Gastrocnemius medialis (tissue), 4 donors: ENCODE measurements at regions of chr4 and their contacts with region 1.

Region 1: DNA sequence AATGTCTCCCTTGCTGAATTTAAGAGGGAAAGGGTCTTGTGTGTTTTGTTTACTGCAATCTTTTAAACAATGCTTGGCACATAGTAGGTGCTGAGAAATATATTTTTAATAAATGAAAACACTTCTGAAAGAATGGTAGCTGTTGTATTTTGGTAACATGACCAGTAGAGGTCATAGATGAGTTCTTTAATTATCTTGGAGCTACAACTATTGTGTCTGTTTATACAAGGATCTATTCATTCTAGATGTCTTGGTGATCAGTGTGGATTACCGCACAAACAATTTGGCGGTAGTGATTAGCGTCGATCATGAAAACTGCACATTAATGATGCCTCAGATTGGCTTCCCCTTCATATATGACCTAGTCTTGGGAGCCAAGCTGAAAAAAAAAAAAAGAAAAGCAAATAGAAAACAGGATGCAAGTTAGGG is 21.4 kb upstream of the SCRG1 start:
- DNase-seq: no peak
- ATAC-seq: no peak
- H3K4me3 ChIP-seq: no peak overlapping the region
- H3K27ac ChIP-seq: no peak overlapping the region
- H3K4me1 ChIP-seq: no peaks in the 10 kb centered on the region
- H3K27me3 ChIP-seq: no peaks in the 10 kb centered on the region
- CTCF ChIP-seq: peak in 1 of 5 experiments; percentile 40
- POLR2A ChIP-seq: no peak

Region 2: DNA sequence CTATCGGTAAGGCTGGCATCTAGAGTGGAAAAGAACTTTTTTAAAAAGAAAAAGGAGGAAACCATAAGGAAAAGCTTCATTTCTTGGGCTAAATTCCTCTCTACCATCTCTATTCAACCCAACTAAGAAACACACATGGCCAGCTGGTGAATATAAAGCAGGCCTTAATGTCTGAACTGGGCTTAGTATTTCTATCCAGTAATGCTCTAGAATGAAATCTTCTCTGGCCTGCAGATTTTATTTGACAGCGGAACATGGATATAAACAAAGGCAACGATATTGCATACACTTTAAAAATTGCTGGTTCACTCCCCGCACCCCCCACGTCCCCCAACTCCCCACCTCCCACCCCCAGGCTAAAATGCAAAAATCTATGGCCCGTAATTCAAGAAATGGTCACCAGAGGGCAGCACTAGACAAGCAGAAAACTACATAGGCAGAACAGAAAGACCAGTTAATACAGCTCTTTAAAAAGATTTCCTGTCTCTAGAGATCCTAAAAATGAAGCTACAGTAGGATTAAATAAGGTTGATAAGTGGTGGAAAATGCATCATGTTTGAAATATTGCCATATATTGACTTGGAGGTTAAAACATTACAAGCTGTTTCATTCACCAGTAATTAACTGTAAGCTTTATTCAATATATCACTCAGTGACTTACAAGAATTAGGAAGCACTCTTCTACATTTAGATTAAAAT is 407.0 kb before region 1 on chr4:
- in situ Hi-C with region 1: loop called in 3 of 4 experiments (anchors 25 kb)
- intact Hi-C with region 1: loop called (anchors 5 kb)
- DNase-seq: no peak
- ATAC-seq: peak; percentile 50 to 61
- H3K4me3 ChIP-seq: no peak overlapping the region
- H3K27ac ChIP-seq: no peak overlapping the region
- H3K4me1 ChIP-seq: no peaks in the 10 kb centered on the region
- H3K27me3 ChIP-seq: no peaks in the 10 kb centered on the region
- CTCF ChIP-seq: peak; percentile 29 to 81 (median 39)
- POLR2A ChIP-seq: no peak

Region 3: GRCh38 chr4:173025131-173025530 is 395.2 kb before region 1 on chr4:
- in situ Hi-C with region 1: loop called (anchors 10 to 25 kb)
- intact Hi-C with region 1: no loop called
- DNase-seq: no peak
- ATAC-seq: peak; percentile 49 to 56
- H3K4me3 ChIP-seq: no peak overlapping the region
- H3K27ac ChIP-seq: no peak overlapping the region
- H3K4me1 ChIP-seq: no peaks in the 10 kb centered on the region
- H3K27me3 ChIP-seq: no peaks in the 10 kb centered on the region
- CTCF ChIP-seq: peak in 4 of 5 experiments; percentile 35 to 44 (median 40)
- POLR2A ChIP-seq: no peak

Region 4: DNA sequence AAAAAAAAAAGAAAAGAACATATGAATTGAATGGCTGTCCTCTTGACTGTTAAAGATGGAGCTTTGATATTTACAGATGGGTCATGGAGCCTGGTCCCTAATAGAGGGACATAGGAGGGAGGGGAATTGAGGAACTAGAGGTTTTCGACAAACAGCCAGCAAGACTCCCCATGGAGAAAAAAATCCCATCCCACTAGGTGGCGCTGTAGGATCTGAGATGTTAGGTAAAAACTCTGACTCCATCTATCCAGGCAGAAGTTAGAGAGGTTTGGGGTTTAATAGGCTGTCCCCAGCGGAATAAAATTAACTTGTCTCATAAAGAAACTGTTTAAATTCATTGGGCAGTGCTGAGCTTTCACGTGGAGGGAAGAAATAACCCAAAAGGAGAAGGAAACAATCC is 132.0 kb before region 1 on chr4:
- in situ Hi-C with region 1: no loop called
- intact Hi-C with region 1: loop called (anchors 1 kb)
- DNase-seq: peak in 1 of 2 donors; percentile 10
- ATAC-seq: no peak
- H3K4me3 ChIP-seq: no peak overlapping the region
- H3K27ac ChIP-seq: no peak overlapping the region
- H3K4me1 ChIP-seq: no peaks in the 10 kb centered on the region
- H3K27me3 ChIP-seq: no peaks in the 10 kb centered on the region
- CTCF ChIP-seq: peak in 3 of 5 experiments; percentile 31 to 51 (median 40)
- POLR2A ChIP-seq: no peak

Region 5: DNA sequence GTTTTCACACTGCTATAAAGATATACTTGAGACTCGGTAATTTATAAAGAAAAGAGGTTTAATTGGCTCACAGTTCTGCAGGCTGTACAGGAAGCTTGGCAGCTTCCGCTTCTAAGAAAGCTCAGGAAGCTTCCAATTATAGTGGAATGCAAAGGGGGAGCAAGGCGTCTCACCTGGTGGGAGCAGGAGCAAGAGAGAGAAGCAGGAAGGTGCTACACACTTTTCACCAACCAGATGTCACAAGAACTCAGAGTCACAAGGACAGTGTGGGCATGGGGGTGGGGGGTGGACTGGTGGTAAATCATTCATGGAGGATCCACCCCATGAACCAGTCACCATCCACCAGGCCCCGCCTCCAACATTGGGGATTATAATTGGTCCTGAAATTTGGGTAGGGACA is 109.0 kb before region 1 on chr4:
- in situ Hi-C with region 1: loop called in 2 of 4 experiments (anchors 5 kb)
- intact Hi-C with region 1: no loop called
- DNase-seq: no peak
- ATAC-seq: no peak
- H3K4me3 ChIP-seq: no peak overlapping the region
- H3K27ac ChIP-seq: no peak overlapping the region
- H3K4me1 ChIP-seq: no peaks in the 10 kb centered on the region
- H3K27me3 ChIP-seq: no peaks in the 10 kb centered on the region
- CTCF ChIP-seq: no peak
- POLR2A ChIP-seq: no peak

Region 6: GRCh38 chr4:173318648-173319211 is 101.6 kb before region 1 on chr4:
- in situ Hi-C with region 1: loop called in 2 of 4 experiments (anchors 5 kb)
- intact Hi-C with region 1: loop called (anchors 1 kb)
- DNase-seq: no peak
- ATAC-seq: peak; percentile 73 to 80
- H3K4me3 ChIP-seq: no peak overlapping the region
- H3K27ac ChIP-seq: no peak overlapping the region
- H3K4me1 ChIP-seq: peaks cover 6 to 10% of the 10 kb centered on the region in 2 donors
- H3K27me3 ChIP-seq: no peaks in the 10 kb centered on the region
- CTCF ChIP-seq: peak in 4 of 5 experiments; percentile 37 to 60 (median 48)
- POLR2A ChIP-seq: no peak

Region 7: GRCh38 chr4:173448603-173449379 is 28.5 kb after region 1 on chr4:
- in situ Hi-C with region 1: no loop called
- intact Hi-C with region 1: no loop called
- DNase-seq: no peak
- ATAC-seq: no peak
- H3K4me3 ChIP-seq: no peak overlapping the region
- H3K27ac ChIP-seq: no peak overlapping the region
- H3K4me1 ChIP-seq: peaks cover 6 to 10% of the 10 kb centered on the region in 2 donors
- H3K27me3 ChIP-seq: no peaks in the 10 kb centered on the region
- CTCF ChIP-seq: no peak
- POLR2A ChIP-seq: no peak

Region 8: GRCh38 chr4:173494013-173494970 is 74.0 kb after region 1 on chr4:
- in situ Hi-C with region 1: loop called in 1 of 4 experiments (anchors 5 kb)
- intact Hi-C with region 1: loop called (anchors 2 kb)
- DNase-seq: peak; percentile 22 to 34
- ATAC-seq: peak; percentile 84 to 86
- H3K4me3 ChIP-seq: peak overlapping the region; percentile 16 to 46 (median 34)
- H3K27ac ChIP-seq: no peak overlapping the region
- H3K4me1 ChIP-seq: peaks cover 0 to 4% of the 10 kb centered on the region in 2 donors
- H3K27me3 ChIP-seq: peaks cover 6 to 8% (median 7%) of the 10 kb centered on the region in 3 donors
- CTCF ChIP-seq: peak; percentile 17 to 72 (median 56)
- POLR2A ChIP-seq: no peak